Activated CD4-positive, alpha-beta memory T cell treated with anti-CD3 and anti-CD28 coated beads, Interleukin-2, amount 10 ng/mL, durations not matched to agents 7 days and 5 days (primary cell): ENCODE measurements at regions of chr1 and their contacts with region 1.

Region 1: GRCh38 chr1:116763787-116764465 is 9.7 kb downstream of the CD2 start:
- DNase-seq: peak; percentile 67
- H3K4me3 Mint-ChIP-seq: peak overlapping the region; percentile 78
- H3K27ac Mint-ChIP-seq: peak overlapping the region; percentile 99
- H3K4me1 Mint-ChIP-seq: peaks cover 96% of the 10 kb centered on the region
- H3K27me3 Mint-ChIP-seq: no peaks in the 10 kb centered on the region

Region 2: DNA sequence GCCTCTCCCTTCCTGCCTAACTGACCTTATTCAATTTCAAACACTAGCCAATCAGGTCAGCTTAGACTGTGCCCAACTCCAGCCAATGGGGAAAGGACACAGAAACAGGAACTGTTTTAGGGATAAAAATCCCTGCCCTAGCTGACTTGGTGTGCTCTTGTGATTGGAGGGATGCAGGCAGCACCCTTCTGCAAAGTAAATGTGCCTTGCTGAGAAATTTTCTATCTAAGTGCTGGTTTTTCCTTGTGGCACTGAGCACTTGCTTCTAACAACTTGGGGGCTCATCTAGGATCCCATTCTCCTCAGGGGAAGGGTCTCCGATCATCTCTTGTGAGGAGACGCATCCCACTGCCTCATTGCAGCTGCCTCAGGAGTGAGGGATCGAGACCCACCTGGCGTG is 20.4 kb before region 1 on chr1:
- CTCF ChIA-PET with region 1: interaction called, 121 read pairs
- POLR2A ChIA-PET with region 1: interaction called, 488 read pairs
- DNase-seq: no peak
- H3K4me3 Mint-ChIP-seq: no peak overlapping the region
- H3K27ac Mint-ChIP-seq: no peak overlapping the region
- H3K4me1 Mint-ChIP-seq: peaks cover 29% of the 10 kb centered on the region
- H3K27me3 Mint-ChIP-seq: no peaks in the 10 kb centered on the region

Region 3: DNA sequence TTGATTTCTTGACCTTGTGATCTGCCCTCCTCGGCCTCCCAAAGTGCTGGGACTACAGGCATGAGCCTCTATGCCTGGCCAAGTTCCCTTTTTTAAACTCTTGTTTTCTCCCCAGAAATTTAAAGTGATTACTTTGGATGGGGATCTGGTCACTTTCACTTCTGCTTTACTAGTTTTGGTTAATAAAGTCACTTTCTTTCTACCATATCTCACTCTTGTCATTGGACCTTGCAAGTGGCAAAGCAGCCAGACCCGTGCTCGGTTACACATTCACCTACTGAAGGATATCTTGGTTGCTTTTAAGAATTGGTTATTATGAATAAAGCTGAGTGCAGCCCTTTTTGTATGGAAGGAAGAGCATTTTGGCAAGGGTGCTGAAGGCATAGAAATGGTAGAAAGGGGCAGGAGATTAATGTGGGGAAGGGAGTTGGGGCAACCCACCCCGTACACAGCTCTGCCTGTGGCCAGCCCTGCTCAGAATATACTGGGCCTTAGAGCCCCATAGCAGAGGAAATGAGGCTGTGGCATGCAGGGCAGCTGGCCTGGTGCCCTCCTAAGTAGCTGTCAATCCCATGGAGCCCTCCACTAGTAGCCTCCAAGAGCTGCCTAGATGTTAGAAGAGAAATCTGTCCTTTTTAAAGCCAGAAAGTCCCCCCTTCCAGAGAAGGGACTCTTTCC is 31.0 kb after region 1 on chr1:
- CTCF ChIA-PET with region 1: interaction called, 34 read pairs
- POLR2A ChIA-PET with region 1: interaction called, 1,051 read pairs
- DNase-seq: no peak
- H3K4me3 Mint-ChIP-seq: no peak overlapping the region
- H3K27ac Mint-ChIP-seq: no peak overlapping the region
- H3K4me1 Mint-ChIP-seq: peaks cover 74% of the 10 kb centered on the region
- H3K27me3 Mint-ChIP-seq: no peaks in the 10 kb centered on the region

Region 4: GRCh38 chr1:116817582-116818064 is 53.7 kb after region 1 on chr1:
- CTCF ChIA-PET with region 1: interaction called, 34 read pairs
- POLR2A ChIA-PET with region 1: interaction called, 250 read pairs
- DNase-seq: peak; percentile 78
- H3K4me3 Mint-ChIP-seq: no peak overlapping the region
- H3K27ac Mint-ChIP-seq: peak overlapping the region; percentile 53
- H3K4me1 Mint-ChIP-seq: peaks cover 63% of the 10 kb centered on the region
- H3K27me3 Mint-ChIP-seq: no peaks in the 10 kb centered on the region

Region 5: GRCh38 chr1:116881879-116882520 is 118.1 kb after region 1 on chr1:
- CTCF ChIA-PET with region 1: interaction called, 6 read pairs
- POLR2A ChIA-PET with region 1: interaction called, 22 read pairs
- DNase-seq: peak; percentile 53
- H3K4me3 Mint-ChIP-seq: no peak overlapping the region
- H3K27ac Mint-ChIP-seq: no peak overlapping the region
- H3K4me1 Mint-ChIP-seq: peaks cover 5% of the 10 kb centered on the region
- H3K27me3 Mint-ChIP-seq: no peaks in the 10 kb centered on the region